Activated CD4-positive, alpha-beta T cell treated with anti-CD3 and anti-CD28 coated beads for 36 hours (primary cell): ENCODE measurements at regions of chr19 and their contacts with region 1.

Region 1: DNA sequence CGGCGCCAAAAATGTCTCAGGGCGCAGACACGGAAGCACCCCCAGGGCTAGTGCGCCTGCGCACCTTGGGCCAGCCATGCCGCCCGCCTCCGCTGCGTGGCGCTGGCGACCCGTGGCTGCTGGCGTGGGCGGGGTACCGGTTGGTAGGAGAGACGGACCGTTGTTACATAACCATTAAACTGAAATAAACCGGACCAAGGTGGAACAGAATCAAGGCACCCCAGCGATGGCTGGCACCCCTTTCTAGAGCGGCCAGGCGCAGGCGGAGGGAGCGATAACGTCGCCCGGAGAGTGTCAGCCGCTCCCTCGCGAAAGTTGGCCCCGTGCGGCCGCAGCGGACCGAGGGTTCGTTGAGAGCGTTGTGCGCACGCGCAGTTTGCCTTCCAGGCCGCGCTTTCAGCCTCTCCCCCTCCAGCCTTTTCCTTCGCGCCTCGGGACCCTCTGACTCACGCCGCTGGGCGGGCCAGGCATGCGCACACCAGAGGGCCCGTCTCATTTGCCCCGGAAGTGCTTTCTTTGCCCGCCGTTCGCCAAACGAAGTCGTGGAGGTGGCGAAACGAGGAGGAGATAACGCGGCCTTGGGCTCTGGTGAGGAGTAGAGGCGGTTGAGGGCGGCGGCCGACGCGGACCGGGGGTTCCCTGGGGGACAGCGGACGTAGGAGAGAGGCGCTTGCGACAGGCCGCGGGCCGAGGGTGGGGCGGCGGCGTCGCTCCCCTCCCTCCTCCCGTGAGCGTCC is at the starts of genes PLEKHJ1 and SF3A2:
- DNase-seq: peak; percentile 99
- ATAC-seq: peak; percentile 87
- H3K4me3 Mint-ChIP-seq: peak within 1 kb of the TSS; percentile 94
- H3K27ac Mint-ChIP-seq: peak within 1 kb of the TSS; percentile 97
- H3K4me1 Mint-ChIP-seq: peaks cover 52% of the 10 kb centered on the region
- H3K27me3 Mint-ChIP-seq: no peaks in the 10 kb centered on the region
- total RNA-seq, gene PLEKHJ1: 38.4 to 61.8 TPM
- total RNA-seq, gene SF3A2: 146 to 192 TPM

Region 2: DNA sequence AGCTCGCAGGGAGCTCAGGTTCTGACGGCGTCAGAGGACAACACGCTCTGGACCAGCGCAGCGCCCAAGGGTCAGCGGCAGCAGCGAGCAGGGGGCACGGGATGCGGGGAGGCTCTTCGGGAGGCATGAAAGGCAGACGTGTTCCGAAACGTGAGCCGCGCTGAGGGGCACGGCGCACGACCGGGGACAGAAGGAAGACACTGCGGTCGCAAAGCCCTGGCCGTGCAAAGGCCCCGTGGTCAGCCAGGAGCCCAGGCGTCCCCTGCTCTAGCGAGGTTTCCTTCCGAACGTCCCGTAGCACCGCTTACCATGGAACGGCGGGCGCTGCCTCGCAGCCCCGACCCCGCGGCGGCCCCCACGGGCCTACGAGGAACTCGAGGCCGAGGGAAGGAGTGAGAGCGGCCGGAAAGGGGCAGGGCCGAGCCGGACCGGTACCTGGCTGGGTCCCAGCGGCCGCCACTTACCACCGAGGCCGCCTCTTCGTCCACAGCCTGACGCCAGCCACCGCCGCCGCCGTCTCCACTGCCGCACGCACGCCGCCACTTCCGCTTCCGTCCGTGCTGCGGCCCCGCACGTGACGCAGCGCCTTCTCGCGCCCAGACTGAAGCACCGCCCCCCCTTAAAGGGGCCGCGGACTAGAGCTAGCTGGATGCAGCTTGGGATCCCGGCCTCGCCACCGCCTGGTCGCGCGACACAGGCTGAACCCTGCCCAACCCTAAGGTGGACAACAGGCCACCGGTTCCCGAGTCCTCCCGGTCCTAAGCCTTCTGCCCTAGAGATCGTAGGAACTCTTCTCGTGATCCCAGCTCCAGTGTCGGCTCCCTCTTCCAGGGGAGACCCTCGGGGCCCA is 360.6 kb before region 1 on chr19:
- CTCF ChIA-PET with region 1: no interaction called
- POLR2A ChIA-PET with region 1: no interaction called
- intact Hi-C with region 1: loop called in 1 of 2 experiments (anchors 5 kb)
- DNase-seq: peak; percentile 95
- ATAC-seq: peak; percentile 96
- H3K4me3 Mint-ChIP-seq: peak overlapping the region; percentile 92
- H3K27ac Mint-ChIP-seq: peak overlapping the region; percentile 97
- H3K4me1 Mint-ChIP-seq: peaks cover 20% of the 10 kb centered on the region
- H3K27me3 Mint-ChIP-seq: no peaks in the 10 kb centered on the region

Region 3: GRCh38 chr19:2096480-2097329 is 139.8 kb before region 1 on chr19 and contains the start of gene IZUMO4:
- CTCF ChIA-PET with region 1: no interaction called
- POLR2A ChIA-PET with region 1: no interaction called
- intact Hi-C with region 1: loop called in 1 of 2 experiments (anchors 1 kb)
- DNase-seq: peak; percentile 100
- ATAC-seq: peak; percentile 85
- H3K4me3 Mint-ChIP-seq: peak within 1 kb of the TSS; percentile 98
- H3K27ac Mint-ChIP-seq: peak within 1 kb of the TSS; percentile 94
- H3K4me1 Mint-ChIP-seq: peaks cover 35% of the 10 kb centered on the region
- H3K27me3 Mint-ChIP-seq: no peaks in the 10 kb centered on the region
- total RNA-seq, gene IZUMO4: 15.2 to 16.6 TPM

Region 4: DNA sequence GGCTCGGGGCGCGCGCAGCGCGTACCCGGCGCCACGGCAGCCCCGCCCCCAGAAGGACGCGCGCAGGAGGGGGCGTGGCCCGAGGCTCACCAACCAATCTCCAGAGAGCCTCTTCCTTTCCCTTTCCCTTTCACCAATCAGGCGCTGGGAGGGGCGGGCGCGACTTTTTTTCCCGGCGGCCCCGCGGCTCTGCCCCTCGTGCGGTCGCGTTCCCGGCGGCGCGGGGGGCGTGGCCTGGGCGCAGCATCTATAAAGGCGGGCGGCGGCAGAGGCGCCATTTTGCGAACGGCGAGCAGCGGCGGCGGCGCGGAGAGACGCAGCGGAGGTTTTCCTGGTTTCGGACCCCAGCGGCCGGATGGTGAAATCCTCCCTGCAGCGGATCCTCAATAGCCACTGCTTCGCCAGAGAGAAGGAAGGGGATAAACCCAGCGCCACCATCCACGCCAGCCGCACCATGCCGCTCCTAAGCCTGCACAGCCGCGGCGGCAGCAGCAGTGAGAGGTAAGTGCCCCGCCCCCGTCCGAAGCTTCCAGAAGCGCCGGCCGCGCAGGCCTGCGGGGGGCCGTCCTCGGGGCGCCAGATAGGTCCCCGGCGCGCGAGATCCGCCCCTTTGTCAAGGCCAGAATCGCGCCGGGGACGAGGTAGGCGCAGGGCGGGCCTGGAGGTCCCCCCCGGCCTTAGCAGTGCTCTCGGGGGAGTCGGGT is 32.9 kb after region 1 on chr19:
- CTCF ChIA-PET with region 1: interaction called, 8 read pairs
- POLR2A ChIA-PET with region 1: interaction called, 3 read pairs
- intact Hi-C with region 1: loop called (anchors 1 kb)
- DNase-seq: peak; percentile 99
- ATAC-seq: peak; percentile 81
- H3K4me3 Mint-ChIP-seq: peak overlapping the region; percentile 89
- H3K27ac Mint-ChIP-seq: peak overlapping the region; percentile 88
- H3K4me1 Mint-ChIP-seq: peaks cover 38% of the 10 kb centered on the region
- H3K27me3 Mint-ChIP-seq: no peaks in the 10 kb centered on the region

Region 5: GRCh38 chr19:2455851-2456570 is 219.5 kb after region 1 on chr19:
- CTCF ChIA-PET with region 1: no interaction called
- POLR2A ChIA-PET with region 1: no interaction called
- intact Hi-C with region 1: loop called in 1 of 2 experiments (anchors 2 kb)
- DNase-seq: peak; percentile 73
- ATAC-seq: peak; percentile 47
- H3K4me3 Mint-ChIP-seq: peak overlapping the region; percentile 84
- H3K27ac Mint-ChIP-seq: peak overlapping the region; percentile 88
- H3K4me1 Mint-ChIP-seq: peaks cover 16% of the 10 kb centered on the region
- H3K27me3 Mint-ChIP-seq: no peaks in the 10 kb centered on the region

Region 6: DNA sequence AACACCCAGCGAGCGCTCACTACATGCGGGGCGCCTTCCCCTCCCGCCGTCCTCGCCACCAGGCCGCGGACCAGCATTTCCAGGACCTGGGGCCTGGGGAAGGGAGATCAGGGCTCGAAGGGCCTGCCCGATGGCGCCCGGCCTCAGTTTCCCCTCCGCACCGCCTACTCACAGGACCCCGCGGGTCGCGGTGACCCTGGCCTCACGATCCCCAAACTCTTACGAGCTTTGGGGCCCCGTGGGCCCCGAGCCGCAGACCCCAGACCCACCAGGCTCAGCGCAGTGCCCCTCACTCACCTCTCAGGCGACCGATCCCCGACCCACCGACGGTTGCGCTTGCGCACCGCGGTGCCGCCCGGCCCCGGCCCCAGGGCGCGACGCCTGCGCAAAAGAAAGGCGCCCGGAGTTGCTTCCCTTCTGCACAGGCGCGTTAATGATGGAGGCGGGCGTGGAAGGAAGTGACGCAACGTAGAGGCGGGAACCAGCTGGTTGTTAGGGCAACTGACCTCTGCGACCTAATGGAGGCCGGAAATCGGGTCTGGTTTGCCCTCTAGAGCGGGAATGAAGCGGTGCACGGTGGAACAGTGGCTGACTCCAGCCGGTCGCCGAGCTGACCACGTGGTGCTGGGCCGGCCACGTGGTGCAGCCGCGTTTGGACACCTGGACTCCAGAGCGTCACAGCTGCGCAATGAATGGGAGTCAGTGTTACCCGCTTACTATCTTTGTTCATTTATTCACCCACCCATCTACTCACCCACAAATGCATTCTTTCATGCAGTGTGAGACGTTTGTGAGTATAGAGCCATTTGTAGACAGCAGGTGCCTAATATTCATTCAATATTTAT is 546.7 kb after region 1 on chr19 and contains the start of gene SGTA:
- CTCF ChIA-PET with region 1: no interaction called
- POLR2A ChIA-PET with region 1: no interaction called
- intact Hi-C with region 1: loop called in 1 of 2 experiments (anchors 1 kb)
- DNase-seq: peak; percentile 98
- ATAC-seq: peak; percentile 84
- H3K4me3 Mint-ChIP-seq: peak within 1 kb of the TSS; percentile 91
- H3K27ac Mint-ChIP-seq: peak within 1 kb of the TSS; percentile 98
- H3K4me1 Mint-ChIP-seq: peaks cover 58% of the 10 kb centered on the region
- H3K27me3 Mint-ChIP-seq: no peaks in the 10 kb centered on the region
- total RNA-seq, gene SGTA: 53.0 to 62.2 TPM